ENCODE measurements at regions of chr2 and their contacts with region 1.

Region 1: DNA sequence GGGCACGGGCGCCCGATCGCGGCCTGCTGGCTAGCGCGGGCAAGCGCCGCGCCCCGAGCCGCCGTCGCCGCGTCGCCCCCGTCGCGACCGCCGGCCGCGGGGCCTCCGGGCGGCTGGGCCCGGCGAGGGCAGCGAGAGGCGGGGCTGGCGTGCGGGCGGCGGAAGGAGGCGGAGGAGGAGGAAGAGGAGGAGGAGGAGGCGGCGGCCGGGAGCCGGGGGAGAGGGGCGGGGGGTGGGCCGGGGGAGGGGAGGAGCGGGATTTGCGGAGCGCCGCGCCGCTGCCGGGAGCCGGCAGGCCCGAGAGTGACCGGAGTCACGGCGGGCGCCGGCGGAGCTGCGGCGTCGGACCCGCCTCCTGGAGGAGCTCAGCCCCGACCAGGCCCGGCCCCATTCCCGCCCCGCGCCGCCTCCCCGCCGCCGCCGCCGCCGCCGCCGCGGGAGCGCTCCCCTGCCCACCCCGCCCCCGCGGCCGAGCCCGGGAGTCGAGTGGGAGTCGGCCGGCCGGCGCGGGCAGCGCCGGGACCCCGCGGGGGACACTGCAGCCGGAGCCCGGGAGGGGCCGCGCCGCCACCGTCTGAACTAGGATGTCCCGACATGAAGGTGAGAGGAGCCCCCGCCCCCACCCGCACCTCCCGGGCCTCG is at the start of gene KCMF1:
- DNase-seq: peak; percentile 94
- total RNA-seq, gene KCMF1: 88.8 TPM

Region 2: DNA sequence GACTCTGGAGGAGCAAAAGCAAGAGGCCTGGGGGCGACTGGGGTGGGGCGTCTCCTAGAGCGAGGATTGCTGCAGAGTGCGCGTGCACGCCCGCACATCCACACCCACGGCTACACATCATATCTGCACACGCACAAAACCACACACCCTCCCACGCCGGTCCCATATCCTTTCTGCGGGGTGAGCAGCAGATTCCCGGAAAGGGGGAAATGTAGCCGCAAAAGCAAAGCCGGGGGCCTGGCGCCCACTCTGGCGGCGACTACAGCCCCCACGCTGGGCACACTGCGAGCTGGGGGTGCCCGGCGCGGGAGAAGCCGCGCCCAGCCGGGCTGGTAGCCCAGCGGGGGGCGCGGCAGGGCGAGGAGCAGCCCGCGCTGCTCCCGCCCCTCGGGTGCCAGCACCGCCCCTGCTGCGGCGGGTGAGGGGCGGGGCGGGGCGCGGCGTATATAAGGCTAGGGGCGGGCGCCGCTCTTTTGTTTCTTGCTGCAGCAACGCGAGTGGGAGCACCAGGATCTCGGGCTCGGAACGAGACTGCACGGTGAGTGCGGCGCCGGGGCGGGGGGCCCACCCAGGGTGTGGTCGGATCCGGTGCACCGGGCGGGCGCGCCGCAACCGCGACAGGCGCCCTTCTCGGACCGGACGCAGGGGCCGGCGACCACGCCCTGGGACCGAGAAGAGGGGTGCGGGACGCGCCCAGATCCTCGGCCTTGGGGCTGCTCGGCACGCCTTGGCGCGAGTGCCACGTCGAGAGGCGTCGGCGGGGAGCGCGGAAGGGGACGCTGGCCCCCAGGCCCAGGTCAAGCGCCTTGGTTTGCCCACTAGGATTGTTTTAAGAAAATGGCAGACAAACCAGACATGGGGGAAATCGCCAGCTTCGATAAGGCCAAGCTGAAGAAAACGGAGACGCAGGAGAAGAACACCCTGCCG is 65.5 kb before region 1 on chr2 and contains the start of gene TMSB10:
- intact Hi-C with region 1: loop called (anchors 5 kb)
- DNase-seq: peak; percentile 96
- total RNA-seq, gene TMSB10: 452 TPM

Region 3: GRCh38 chr2:85053802-85054201 is 82.8 kb after region 1 on chr2:
- intact Hi-C with region 1: no loop called
- DNase-seq: no peak

Measured in cardiac septum (tissue), 1 donor.